Posterior cingulate gyrus (tissue), 11 donors: ENCODE measurements at regions of chr16 and their contacts with region 1.

Region 1: GRCh38 chr16:22126103-22126502 is 33.8 kb downstream of the VWA3A start:
- DNase-seq: no peak

Region 2: GRCh38 chr16:22138482-22138881 is 12.4 kb after region 1 on chr16:
- intact Hi-C with region 1: loop called (anchors 1 kb)
- DNase-seq: no peak

Region 3: GRCh38 chr16:22174642-22175041 is 48.5 kb after region 1 on chr16:
- intact Hi-C with region 1: no loop called
- DNase-seq: peak in 2 of 10 donors; percentile 14 to 24